ENCODE measurements at regions of chr2 and their contacts with region 1.

Region 1: DNA sequence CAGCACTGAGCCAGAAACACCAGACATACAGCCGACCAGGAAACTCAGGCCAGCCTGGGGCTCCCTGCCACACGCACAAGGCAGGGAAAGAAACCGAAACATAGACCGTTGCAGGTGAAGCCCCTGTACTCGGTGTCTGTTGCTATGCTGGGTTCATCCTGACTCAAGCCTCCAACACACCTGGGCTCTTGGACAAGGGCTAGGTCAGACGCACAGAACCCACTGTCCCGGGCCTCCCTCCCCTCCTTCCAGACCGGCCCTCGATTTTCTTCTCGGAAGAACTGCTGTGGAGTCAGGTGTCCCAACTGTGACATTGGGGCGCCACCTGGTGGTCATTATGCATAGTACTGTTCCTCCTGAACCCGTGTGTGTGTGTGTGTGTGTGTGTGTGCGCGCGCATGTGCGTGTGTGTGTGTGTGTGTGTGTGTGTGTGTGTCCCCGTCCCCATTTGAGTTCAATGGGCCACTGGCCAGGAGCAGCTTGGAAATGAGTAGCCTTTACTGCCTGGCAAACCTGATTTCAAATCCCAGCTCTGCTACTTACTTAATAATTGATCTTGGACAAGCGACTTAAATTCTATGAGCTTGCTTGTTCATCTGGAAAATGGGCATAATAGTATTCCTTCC is 55.4 kb upstream of the GLI2 start:
- DNase-seq: no peak
- H3K4me3 ChIP-seq: no peak overlapping the region
- CTCF ChIP-seq: peak; percentile 79

Region 2: GRCh38 chr2:120287183-120288015 is 392.9 kb before region 1 on chr2:
- CTCF ChIA-PET with region 1: interaction called, 21 read pairs
- POLR2A ChIA-PET with region 1: no interaction called
- DNase-seq: peak; percentile 64
- H3K4me3 ChIP-seq: no peak overlapping the region
- CTCF ChIP-seq: no peak

Region 3: GRCh38 chr2:120312861-120313694 is 367.2 kb before region 1 on chr2:
- CTCF ChIA-PET with region 1: interaction called, 202 read pairs
- POLR2A ChIA-PET with region 1: no interaction called
- DNase-seq: no peak
- H3K4me3 ChIP-seq: peak overlapping the region; percentile 63
- CTCF ChIP-seq: peak; percentile 94

Region 4: GRCh38 chr2:120343433-120344105 is 336.7 kb before region 1 on chr2:
- CTCF ChIA-PET with region 1: interaction called, 576 read pairs
- POLR2A ChIA-PET with region 1: no interaction called
- DNase-seq: peak; percentile 17
- H3K4me3 ChIP-seq: peak overlapping the region; percentile 23
- CTCF ChIP-seq: peak; percentile 95

Region 5: GRCh38 chr2:120669121-120669952 is 10.9 kb before region 1 on chr2:
- CTCF ChIA-PET with region 1: interaction called, 20 read pairs
- POLR2A ChIA-PET with region 1: no interaction called
- DNase-seq: no peak
- H3K4me3 ChIP-seq: no peak overlapping the region
- CTCF ChIP-seq: peak; percentile 58

Region 6: DNA sequence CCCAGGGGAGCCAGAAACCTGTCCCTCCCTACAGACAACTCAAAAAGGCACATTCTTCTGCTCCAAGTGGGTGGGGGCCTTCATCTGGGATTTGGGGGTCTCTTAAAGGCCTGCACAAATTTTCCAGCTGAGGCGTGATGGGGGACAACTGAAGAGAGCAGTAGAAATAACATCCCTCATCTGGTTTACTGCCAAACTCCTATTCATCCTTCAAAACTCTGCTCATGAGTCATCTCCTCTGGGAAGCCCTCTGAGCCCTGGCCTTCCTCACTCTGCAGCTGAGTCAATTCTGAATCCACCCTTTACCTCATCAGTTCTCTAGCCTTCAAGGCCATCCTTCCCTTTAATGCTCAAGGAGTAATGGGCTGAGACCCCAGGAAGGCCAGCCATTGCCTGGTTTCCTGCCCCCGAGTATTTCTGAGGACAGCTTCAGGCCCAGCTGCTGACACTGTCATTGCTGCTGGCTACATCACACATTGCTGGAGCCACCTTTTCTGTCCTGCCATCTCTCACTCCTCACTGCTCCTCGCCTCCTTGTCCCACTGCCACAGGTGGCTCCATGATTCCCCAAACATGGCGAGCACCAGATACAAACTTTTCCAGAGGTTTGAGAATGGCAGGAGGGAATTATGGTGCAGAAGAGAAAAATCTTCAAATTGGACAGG is 23.2 kb after region 1 on chr2:
- CTCF ChIA-PET with region 1: no interaction called
- POLR2A ChIA-PET with region 1: no interaction called
- DNase-seq: no peak
- H3K4me3 ChIP-seq: no peak overlapping the region
- CTCF ChIP-seq: no peak

Region 7: DNA sequence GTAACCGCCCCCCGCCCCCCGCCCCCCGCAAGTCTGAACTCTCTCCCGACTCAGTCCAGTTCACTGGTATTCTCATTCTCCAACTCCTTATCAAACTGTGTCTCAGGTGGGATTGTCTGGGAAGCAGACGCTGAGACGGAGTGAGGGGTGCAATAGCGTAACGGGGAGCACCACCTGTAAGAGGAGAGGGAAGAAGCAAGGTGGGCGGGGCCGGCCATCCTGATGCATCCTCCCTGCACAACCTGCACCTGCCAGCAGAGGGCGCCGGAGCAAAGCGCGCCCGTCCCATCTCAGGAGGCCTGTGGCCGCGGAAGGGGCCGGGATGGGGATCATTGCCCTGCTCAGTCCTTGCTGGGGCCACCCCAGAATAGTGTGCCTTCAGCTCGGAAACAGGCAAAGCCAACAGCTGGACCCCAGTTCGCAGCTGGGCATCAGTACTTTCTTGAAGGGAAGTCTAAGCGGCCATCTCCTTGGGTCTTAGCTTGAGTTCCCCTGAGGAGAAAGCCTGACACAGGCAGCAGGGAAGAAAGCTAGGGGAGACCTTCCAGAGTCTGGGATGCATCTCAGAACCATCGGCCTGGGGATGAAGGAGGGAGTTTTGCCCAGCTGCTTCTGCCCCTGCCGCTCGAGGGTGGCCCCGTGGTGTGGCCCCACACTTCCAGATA is 396.8 kb after region 1 on chr2:
- CTCF ChIA-PET with region 1: interaction called, 767 read pairs
- POLR2A ChIA-PET with region 1: interaction called, 17 read pairs
- DNase-seq: no peak
- H3K4me3 ChIP-seq: no peak overlapping the region
- CTCF ChIP-seq: peak; percentile 98

Measured in AG04449 (cell line).